ENCODE measurements at regions of chr4 and their contacts with region 1.

Region 1: DNA sequence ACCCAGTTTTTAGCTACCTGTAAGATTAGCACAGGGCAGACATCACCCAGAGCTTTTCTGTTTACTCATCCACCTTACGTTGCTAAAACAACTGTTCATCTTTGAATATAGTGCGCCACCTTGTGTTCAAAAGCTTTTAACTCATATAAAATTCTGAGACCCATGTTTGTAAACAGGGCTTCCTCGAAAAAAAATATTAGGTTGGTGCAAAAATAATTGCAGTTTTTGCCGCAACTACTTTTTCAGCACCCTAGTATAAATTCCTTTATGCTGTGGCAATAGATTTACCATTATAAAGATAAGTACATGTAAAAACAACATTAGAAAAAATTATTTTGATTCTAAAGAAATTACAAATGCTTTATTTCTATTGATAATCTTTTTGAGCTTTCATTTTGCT is 147.9 kb downstream of the LRBA start:
- DNase-seq: no peak
- H3K4me3 Mint-ChIP-seq: no peak overlapping the region
- H3K27ac Mint-ChIP-seq: no peak overlapping the region
- H3K4me1 Mint-ChIP-seq: no peaks in the 10 kb centered on the region
- H3K27me3 Mint-ChIP-seq: no peaks in the 10 kb centered on the region

Region 2: DNA sequence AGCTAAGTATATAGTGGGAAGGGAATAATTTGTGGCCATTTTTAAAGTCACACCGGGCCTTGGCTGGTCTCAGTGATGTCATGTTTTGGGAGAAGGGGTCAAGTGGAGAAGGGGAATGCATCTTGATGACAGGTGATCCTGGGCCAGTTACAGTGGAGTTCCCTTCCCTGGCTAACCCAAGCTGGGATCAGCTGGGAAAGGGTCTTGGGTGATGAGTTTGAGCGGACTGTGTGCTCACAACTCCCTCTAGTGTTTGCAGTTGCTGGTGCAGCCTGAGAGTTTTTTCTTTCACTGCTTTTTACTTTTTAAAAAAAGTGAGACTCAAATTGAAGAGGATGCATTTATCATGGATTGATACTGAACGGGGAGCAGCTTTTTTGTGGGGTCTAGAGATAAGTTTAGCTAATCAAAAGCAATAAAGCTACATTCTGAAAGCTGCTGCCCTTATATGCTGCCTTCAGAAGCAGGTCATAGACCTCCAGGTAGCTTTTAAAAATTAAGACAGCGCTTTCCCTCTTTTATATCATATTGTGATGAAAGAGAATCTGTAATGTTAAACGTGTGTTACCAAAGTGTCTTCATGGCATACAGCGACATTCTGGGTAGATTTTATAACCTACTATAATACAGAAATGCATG is 624.2 kb before region 1 on chr4:
- CTCF ChIA-PET with region 1: interaction called, 15 read pairs
- POLR2A ChIA-PET with region 1: no interaction called
- intact Hi-C with region 1: no loop called
- DNase-seq: peak; percentile 28
- H3K4me3 Mint-ChIP-seq: no peak overlapping the region
- H3K27ac Mint-ChIP-seq: no peak overlapping the region
- H3K4me1 Mint-ChIP-seq: no peaks in the 10 kb centered on the region
- H3K27me3 Mint-ChIP-seq: peaks cover 11% of the 10 kb centered on the region

Region 3: GRCh38 chr4:150297861-150298474 is 569.2 kb before region 1 on chr4:
- CTCF ChIA-PET with region 1: interaction called, 24 read pairs
- POLR2A ChIA-PET with region 1: no interaction called
- intact Hi-C with region 1: loop called (anchors 1 kb)
- DNase-seq: peak; percentile 34
- H3K4me3 Mint-ChIP-seq: no peak overlapping the region
- H3K27ac Mint-ChIP-seq: no peak overlapping the region
- H3K4me1 Mint-ChIP-seq: peaks cover 7% of the 10 kb centered on the region
- H3K27me3 Mint-ChIP-seq: no peaks in the 10 kb centered on the region

Region 4: GRCh38 chr4:150828159-150828558 is 39.0 kb before region 1 on chr4:
- CTCF ChIA-PET with region 1: interaction called, 15 read pairs
- POLR2A ChIA-PET with region 1: no interaction called
- intact Hi-C with region 1: loop called (anchors 2 kb)
- DNase-seq: peak; percentile 76
- H3K4me3 Mint-ChIP-seq: no peak overlapping the region
- H3K27ac Mint-ChIP-seq: peak overlapping the region; percentile 72
- H3K4me1 Mint-ChIP-seq: peaks cover 42% of the 10 kb centered on the region
- H3K27me3 Mint-ChIP-seq: no peaks in the 10 kb centered on the region

Region 5: GRCh38 chr4:150855981-150856510 is 11.1 kb before region 1 on chr4:
- CTCF ChIA-PET with region 1: interaction called, 29 read pairs
- POLR2A ChIA-PET with region 1: no interaction called
- intact Hi-C with region 1: no loop called
- DNase-seq: no peak
- H3K4me3 Mint-ChIP-seq: no peak overlapping the region
- H3K27ac Mint-ChIP-seq: no peak overlapping the region
- H3K4me1 Mint-ChIP-seq: no peaks in the 10 kb centered on the region
- H3K27me3 Mint-ChIP-seq: no peaks in the 10 kb centered on the region

Region 6: GRCh38 chr4:150970685-150971151 is 103.6 kb after region 1 on chr4:
- CTCF ChIA-PET with region 1: interaction called, 10 read pairs
- POLR2A ChIA-PET with region 1: no interaction called
- intact Hi-C with region 1: no loop called
- DNase-seq: no peak
- H3K4me3 Mint-ChIP-seq: no peak overlapping the region
- H3K27ac Mint-ChIP-seq: peak overlapping the region; percentile 10
- H3K4me1 Mint-ChIP-seq: peaks cover 59% of the 10 kb centered on the region
- H3K27me3 Mint-ChIP-seq: no peaks in the 10 kb centered on the region

Region 7: DNA sequence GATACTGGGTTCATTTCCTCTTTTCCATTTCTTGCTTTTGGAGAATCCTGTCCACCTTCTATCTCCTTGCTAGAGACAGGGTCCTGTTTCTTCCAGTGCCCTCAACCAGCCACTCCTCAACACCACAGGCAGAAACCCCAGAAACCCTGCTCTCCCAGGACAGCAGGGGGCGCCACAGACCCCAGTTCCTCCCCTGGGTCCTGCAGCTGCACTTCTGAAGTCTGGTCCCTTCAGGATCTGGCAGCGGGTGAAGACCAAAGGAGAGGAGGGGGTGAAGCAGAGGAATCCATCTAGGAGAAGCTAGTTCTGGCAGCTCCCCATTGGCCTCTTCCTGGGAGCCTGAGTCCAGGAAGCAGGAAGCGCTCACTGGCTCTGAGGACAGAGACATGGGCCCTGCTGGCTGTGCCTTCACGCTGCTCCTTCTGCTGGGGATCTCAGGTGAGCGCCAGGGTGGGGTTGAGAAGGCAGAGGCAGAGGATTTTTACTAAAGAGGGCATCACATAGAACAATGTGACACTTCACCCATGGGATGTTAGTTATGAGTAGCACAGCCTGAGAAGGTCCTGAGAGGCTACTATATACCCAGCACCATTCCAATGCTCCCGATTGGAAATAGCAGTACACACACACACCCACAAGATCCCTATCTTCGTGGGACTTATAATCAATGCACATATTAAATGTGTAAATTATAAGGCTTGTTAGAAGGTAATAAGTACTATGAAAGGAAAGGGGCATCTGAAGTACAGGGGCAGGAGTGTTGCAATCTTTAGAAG is 409.8 kb after region 1 on chr4 and contains the start of gene PRSS48:
- CTCF ChIA-PET with region 1: no interaction called
- POLR2A ChIA-PET with region 1: no interaction called
- intact Hi-C with region 1: no loop called
- DNase-seq: peak; percentile 67
- H3K4me3 Mint-ChIP-seq: no peak within 1 kb of the TSS
- H3K27ac Mint-ChIP-seq: no peak within 1 kb of the TSS
- H3K4me1 Mint-ChIP-seq: no peaks in the 10 kb centered on the region
- H3K27me3 Mint-ChIP-seq: peaks cover 1% of the 10 kb centered on the region
- total RNA-seq, gene PRSS48: not detected